ENCODE measurements at regions of chr4 and their contacts with region 1.

Region 1: GRCh38 chr4:118772081-118772766 is 63.7 kb downstream of the SEC24D start:
- DNase-seq: no peak

Region 2: DNA sequence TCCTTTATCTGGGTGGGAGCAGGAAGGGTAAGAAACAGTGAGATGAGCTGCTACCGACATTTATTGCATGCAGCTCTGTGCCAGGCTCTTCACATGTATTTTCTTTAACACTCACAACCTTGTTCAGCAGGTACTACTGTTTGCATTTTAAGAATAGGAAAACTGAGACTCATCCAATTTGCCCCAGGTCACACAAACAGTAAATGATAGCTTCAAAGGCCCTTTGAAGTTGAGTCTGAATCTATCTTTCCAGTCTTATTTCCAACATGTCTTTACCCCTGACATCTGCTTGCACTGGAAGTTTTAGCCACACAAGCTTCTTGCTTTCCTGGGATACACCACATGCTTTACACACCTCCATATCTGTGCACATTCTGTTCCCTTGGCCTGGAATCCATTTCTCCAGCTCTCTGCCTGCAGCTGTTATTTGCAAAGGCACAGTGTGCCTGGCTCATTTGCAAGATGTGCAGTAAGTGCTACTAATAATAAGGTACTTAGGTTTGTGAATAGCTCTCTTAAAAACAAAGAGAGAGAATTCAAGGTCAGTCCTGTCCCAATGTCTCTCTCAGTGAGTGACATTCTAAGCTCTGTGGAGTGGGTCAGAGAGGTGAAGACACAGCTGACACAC is 25.8 kb before region 1 on chr4:
- intact Hi-C with region 1: loop called (anchors 2 kb)
- DNase-seq: no peak

Region 3: DNA sequence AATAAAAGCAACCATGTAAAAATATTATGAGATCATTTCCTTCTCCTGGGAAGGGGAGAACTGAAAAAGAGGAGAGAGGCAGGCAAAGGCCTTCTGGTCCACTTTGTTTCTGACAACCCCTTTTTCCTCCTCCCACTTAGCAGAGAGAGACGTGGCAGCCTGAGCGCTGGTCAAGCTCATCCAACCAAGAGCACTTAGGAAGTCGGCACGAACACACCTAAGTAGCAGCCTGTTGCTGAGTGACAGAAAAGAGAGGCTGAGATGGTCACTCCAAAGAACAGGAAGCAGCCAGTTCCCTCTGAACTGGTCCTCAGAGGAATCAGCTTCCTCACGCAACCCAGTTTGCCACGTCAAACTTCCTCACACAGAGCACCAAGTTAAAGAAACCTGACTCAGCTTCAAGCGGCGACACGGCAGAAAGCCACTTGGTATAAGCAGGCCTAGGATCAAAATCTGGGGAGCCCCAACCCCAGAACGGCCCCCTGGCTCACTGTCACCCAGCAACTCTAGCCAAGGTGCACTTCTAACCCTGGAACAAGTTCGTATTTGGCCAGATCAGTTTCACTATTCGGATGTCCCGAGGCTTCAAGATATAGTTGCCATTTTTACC is 62.8 kb after region 1 on chr4:
- intact Hi-C with region 1: loop called (anchors 5 kb)
- DNase-seq: peak; percentile 91

Region 4: GRCh38 chr4:118888666-118889311 is 116.6 kb after region 1 on chr4 and contains the start of gene SYNPO2:
- intact Hi-C with region 1: loop called (anchors 2 kb)
- DNase-seq: peak; percentile 90
- total RNA-seq, gene SYNPO2: 316 TPM

Region 5: GRCh38 chr4:118968005-118968404 is 195.8 kb after region 1 on chr4:
- intact Hi-C with region 1: loop called (anchors 1 kb)
- DNase-seq: no peak

Measured in cardiac septum (tissue), 1 donor.